ENCODE measurements at regions of chr19 and their contacts with region 1.

Region 1: GRCh38 chr19:12672744-12673143 is 6.1 kb downstream of the WDR83 start:
- DNase-seq: no peak
- H3K4me3 ChIP-seq: no peak overlapping the region
- H3K27ac ChIP-seq: no peak overlapping the region
- H3K4me1 ChIP-seq: peaks cover 18% of the 10 kb centered on the region
- H3K27me3 ChIP-seq: no peaks in the 10 kb centered on the region
- CTCF ChIP-seq: no peak

Region 2: DNA sequence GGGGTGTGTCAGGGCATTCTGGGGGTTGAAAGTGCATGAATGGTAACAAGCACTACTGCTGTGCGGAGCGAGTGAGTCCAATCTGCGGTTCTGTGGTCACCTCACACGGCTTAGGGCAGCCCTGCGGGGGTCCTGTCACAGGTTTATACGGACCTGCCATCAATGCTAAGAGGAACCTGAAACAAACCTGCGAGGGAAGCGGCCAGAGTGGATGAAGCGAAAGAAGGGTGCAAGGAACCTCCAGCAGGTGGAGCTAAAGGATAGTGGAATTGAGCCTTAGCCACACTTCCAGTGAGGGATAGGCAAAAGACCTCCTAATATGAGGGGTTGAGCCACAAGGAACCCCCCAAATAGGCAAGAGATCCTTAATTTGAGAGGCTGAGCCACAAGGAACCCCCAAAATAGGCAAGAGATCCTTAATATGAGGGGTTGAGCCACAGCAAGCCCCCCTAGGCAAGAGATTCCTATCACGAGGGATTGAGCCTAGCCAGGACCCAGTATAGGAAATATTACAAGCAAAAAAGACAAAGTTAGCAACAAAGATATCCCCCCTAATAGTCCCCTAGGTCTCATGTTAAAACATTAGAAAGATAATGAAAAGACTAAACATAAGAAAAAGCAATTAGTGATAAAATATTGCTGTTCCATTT is 791.5 kb before region 1 on chr19:
- CTCF ChIA-PET with region 1: no interaction called
- dilution Hi-C with region 1: no loop called
- in situ Hi-C with region 1: no loop called
- intact Hi-C with region 1: loop called (anchors 1 kb)
- DNase-seq: peak; percentile 48
- H3K4me3 ChIP-seq: no peak overlapping the region
- H3K27ac ChIP-seq: no peak overlapping the region
- H3K4me1 ChIP-seq: no peaks in the 10 kb centered on the region
- H3K27me3 ChIP-seq: no peaks in the 10 kb centered on the region
- CTCF ChIP-seq: peak; percentile 38 to 73

Region 3: DNA sequence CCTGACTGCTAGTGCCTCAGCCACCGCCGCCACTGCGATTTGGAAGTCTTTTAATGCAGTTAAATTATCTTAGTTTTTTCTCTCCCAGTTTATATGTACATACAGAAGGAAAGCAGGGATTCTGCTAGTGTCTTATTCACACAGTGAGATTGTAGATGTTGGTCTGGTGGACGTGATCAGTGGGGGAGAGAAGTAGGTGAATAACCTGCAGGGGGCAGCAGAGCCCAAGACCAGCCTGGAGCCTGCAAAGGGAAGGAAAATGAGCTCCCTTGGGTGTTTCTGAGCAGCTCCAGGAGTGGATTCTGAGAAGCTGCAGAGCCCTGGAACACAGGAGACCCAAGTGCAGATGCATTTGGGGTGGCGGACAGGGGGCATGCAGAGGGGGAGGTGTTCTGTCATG is 581.9 kb before region 1 on chr19:
- CTCF ChIA-PET with region 1: interaction called, 3 read pairs
- dilution Hi-C with region 1: no loop called
- in situ Hi-C with region 1: no loop called
- intact Hi-C with region 1: loop called (anchors 2 kb)
- DNase-seq: peak; percentile 10
- H3K4me3 ChIP-seq: no peak overlapping the region
- H3K27ac ChIP-seq: no peak overlapping the region
- H3K4me1 ChIP-seq: no peaks in the 10 kb centered on the region
- H3K27me3 ChIP-seq: no peaks in the 10 kb centered on the region
- CTCF ChIP-seq: peak in 1 of 2 donors; percentile 50

Region 4: GRCh38 chr19:12639901-12640613 is 32.7 kb before region 1 on chr19:
- CTCF ChIA-PET with region 1: no interaction called
- dilution Hi-C with region 1: no loop called
- in situ Hi-C with region 1: no loop called
- intact Hi-C with region 1: loop called (anchors 1 kb)
- DNase-seq: peak; percentile 50
- H3K4me3 ChIP-seq: peak overlapping the region in 1 of 3 experiments; percentile 10
- H3K27ac ChIP-seq: no peak overlapping the region
- H3K4me1 ChIP-seq: no peaks in the 10 kb centered on the region
- H3K27me3 ChIP-seq: no peaks in the 10 kb centered on the region
- CTCF ChIP-seq: peak; percentile 47 to 68

Region 5: DNA sequence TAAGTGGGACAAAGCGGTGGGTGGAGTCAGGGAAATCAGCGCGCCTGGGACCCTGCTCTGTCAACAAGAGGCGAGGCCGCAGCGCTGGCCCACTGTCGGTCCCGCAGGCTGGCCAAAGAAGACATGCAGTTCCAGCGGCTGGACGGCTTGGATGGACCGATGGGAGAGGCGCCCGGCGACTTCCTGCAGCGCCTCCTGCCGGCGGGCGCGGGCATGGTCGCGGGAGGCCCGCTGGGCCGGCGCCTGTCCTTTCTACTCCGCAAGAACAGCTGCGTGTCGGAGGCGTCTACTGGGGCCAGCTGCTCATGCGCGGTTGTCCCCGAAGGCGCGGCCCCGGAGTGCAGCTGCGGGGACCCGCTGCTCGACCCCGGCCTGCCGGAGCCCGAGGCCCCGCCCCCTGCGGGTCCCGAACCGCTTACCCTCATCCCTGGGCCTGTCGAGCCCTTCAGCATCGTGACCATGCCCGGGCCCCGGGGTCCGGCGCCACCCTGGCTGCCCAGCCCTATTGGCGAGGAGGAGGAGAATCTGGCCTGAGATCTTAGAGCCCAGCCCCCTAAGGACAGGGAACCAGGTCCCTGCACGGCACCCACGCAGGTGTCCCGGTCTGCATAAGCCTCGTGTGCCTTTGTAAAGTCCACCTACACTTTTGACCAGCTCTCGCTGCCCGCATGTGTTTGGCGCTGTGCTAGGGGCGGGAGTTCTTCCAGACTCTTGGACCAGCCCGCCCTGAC is 85.0 kb after region 1 on chr19:
- CTCF ChIA-PET with region 1: no interaction called
- dilution Hi-C with region 1: no loop called
- in situ Hi-C with region 1: no loop called
- intact Hi-C with region 1: no loop called
- DNase-seq: peak; percentile 55
- H3K4me3 ChIP-seq: peak overlapping the region in 2 of 3 experiments; percentile 32 to 38
- H3K27ac ChIP-seq: no peak overlapping the region
- H3K4me1 ChIP-seq: peaks cover 7% of the 10 kb centered on the region
- H3K27me3 ChIP-seq: no peaks in the 10 kb centered on the region
- CTCF ChIP-seq: peak; percentile 82 to 92

Measured in mammary epithelial cell (primary cell).